Naive thymus-derived CD4-positive, alpha-beta T cell (primary cell): ENCODE measurements at regions of chr1 and their contacts with region 1.

Region 1: GRCh38 chr1:23019094-23019862 is at the start of gene KDM1A:
- DNase-seq: peak; percentile 88 to 95 (median 92)
- ATAC-seq: peak; percentile 99
- H3K4me3 ChIP-seq: peak within 1 kb of the TSS; percentile 84
- H3K4me3 Mint-ChIP-seq: peak within 1 kb of the TSS; percentile 87 to 98 (median 98)
- H3K27ac ChIP-seq: peak within 1 kb of the TSS; percentile 76
- H3K27ac Mint-ChIP-seq: peak within 1 kb of the TSS; percentile 86 to 98 (median 93)
- H3K4me1 ChIP-seq: peaks cover 4 to 14% of the 10 kb centered on the region in 2 donors
- H3K4me1 Mint-ChIP-seq: peaks cover 16 to 52% (median 46%) of the 10 kb centered on the region in 7 donors
- H3K27me3 ChIP-seq: no peaks in the 10 kb centered on the region
- H3K27me3 Mint-ChIP-seq: no peaks in the 10 kb centered on the region
- total RNA-seq, gene KDM1A: 40.6 to 56.0 (median 47.7) TPM

Region 2: GRCh38 chr1:23004112-23004511 is 15.2 kb before region 1 on chr1:
- CTCF ChIA-PET with region 1: no interaction called
- POLR2A ChIA-PET with region 1: no interaction called
- intact Hi-C with region 1: no loop called
- DNase-seq: no peak
- ATAC-seq: no peak
- H3K4me3 ChIP-seq: no peak overlapping the region
- H3K4me3 Mint-ChIP-seq: no peak overlapping the region
- H3K27ac ChIP-seq: no peak overlapping the region
- H3K27ac Mint-ChIP-seq: no peak overlapping the region
- H3K4me1 ChIP-seq: no peaks in the 10 kb centered on the region
- H3K4me1 Mint-ChIP-seq: no peaks in the 10 kb centered on the region
- H3K27me3 ChIP-seq: no peaks in the 10 kb centered on the region
- H3K27me3 Mint-ChIP-seq: peaks cover 0 to 10% (median 4%) of the 10 kb centered on the region in 5 donors

Region 3: DNA sequence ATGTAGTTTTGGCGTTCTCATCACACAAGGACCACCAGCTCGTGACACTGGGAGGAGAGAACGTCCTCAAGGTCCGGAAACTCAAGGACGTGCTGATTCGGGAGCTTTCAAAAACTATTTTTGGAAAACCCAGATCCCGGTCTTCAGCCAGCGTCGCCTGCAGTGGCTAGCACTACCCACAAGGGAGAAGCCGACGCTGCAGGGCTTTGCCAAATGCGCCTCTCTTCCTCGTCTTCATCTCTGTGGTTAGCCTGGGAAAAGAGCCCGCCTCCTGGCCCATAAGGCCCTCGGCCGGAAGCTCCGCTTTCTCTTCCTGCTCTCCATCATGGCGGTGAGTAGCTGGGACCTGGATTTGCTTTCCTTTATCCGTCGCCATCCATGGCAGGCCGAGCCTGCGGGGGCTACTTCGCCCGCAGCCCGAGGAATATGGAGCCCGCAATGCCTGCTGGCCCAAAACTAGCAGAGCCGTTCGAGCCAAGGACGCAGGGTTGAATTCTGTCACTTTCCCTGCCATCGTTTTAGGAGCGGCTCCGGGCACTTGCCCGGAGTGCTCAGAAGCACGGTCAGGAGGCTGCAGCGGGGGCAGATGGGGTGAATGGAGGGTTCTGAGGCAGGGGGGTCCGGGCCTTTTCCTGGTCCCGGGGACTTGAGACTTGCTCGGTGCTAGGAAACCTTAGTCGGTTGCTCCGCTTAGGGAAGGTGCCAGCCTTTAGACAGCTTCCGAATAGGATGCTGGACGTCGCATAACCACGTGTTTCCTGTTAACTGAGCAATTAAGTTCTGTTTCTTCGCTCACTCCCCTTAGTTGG is 672.4 kb after region 1 on chr1 and contains the start of gene RPL11:
- CTCF ChIA-PET with region 1: interaction called, 3 read pairs
- POLR2A ChIA-PET with region 1: no interaction called
- intact Hi-C with region 1: loop called in 1 of 2 experiments (anchors 2 kb)
- DNase-seq: peak; percentile 60 to 92 (median 88)
- ATAC-seq: peak; percentile 100
- H3K4me3 ChIP-seq: peak within 1 kb of the TSS; percentile 82
- H3K4me3 Mint-ChIP-seq: peak within 1 kb of the TSS; percentile 87 to 96 (median 94)
- H3K27ac ChIP-seq: peak within 1 kb of the TSS; percentile 88
- H3K27ac Mint-ChIP-seq: peak within 1 kb of the TSS; percentile 87 to 97 (median 93)
- H3K4me1 ChIP-seq: peaks cover 19 to 20% of the 10 kb centered on the region in 2 donors
- H3K4me1 Mint-ChIP-seq: peaks cover 33 to 50% (median 45%) of the 10 kb centered on the region in 7 donors
- H3K27me3 ChIP-seq: no peaks in the 10 kb centered on the region
- H3K27me3 Mint-ChIP-seq: no peaks in the 10 kb centered on the region
- total RNA-seq, gene RPL11: 1,206 to 2,420 (median 2,172) TPM

Region 4: DNA sequence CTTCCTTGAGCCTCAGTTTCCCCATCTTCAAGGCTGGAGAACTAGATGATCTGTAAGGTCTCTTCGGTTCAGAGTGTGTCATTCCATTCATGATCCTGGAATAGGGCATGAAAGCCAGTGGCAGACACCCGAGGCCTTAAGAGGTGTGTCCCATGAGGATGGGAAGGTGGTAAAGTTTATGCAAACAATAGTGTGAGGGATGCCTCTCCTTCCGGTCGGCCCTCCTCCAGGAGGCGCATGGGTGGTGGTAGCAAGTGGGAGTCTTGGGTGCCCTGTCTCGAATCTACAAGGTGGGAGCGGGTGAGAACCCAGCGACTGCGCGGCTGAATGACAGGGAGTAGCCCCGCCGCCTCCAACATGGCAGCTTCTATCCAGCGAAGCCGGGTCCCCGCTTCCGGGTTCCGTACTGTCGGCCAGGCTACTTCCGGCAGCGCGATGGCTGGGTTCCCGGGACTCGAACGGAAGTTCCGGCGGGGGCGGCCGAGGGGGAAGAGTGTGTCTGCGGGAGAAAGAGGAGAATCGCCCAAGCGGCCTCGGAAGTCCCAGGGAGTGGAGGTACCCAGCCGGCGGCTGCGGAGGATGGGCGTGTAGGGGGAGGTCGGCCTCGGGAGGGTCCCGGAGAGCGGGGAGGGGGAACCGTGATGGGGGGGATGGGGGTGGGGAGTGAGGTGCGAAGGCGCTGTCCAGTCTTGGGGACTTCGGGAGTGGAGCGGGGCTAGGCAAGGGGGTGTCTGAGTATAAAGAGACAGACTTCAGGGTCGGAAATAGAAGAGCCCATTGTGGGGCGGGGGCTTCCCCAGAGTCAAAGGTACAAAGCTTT is 771.6 kb after region 1 on chr1 and contains the start of gene LYPLA2:
- CTCF ChIA-PET with region 1: no interaction called
- POLR2A ChIA-PET with region 1: no interaction called
- intact Hi-C with region 1: loop called in 1 of 2 experiments (anchors 1 kb)
- DNase-seq: peak; percentile 65 to 90 (median 79)
- ATAC-seq: peak; percentile 91
- H3K4me3 ChIP-seq: peak within 1 kb of the TSS; percentile 96
- H3K4me3 Mint-ChIP-seq: peak within 1 kb of the TSS; percentile 91 to 98 (median 97)
- H3K27ac ChIP-seq: peak within 1 kb of the TSS; percentile 88
- H3K27ac Mint-ChIP-seq: peak within 1 kb of the TSS; percentile 88 to 99 (median 97)
- H3K4me1 ChIP-seq: peaks cover 6 to 18% of the 10 kb centered on the region in 2 donors
- H3K4me1 Mint-ChIP-seq: peaks cover 9 to 28% (median 23%) of the 10 kb centered on the region in 7 donors
- H3K27me3 ChIP-seq: no peaks in the 10 kb centered on the region
- H3K27me3 Mint-ChIP-seq: no peaks in the 10 kb centered on the region
- total RNA-seq, gene LYPLA2: 40.7 to 83.8 (median 48.2) TPM